ENCODE measurements at regions of chr14 and their contacts with region 1.

Region 1: GRCh38 chr14:23483236-23483854 is 13.8 kb downstream of the NGDN start:
- DNase-seq: peak; percentile 61 to 97 (median 81)

Region 2: DNA sequence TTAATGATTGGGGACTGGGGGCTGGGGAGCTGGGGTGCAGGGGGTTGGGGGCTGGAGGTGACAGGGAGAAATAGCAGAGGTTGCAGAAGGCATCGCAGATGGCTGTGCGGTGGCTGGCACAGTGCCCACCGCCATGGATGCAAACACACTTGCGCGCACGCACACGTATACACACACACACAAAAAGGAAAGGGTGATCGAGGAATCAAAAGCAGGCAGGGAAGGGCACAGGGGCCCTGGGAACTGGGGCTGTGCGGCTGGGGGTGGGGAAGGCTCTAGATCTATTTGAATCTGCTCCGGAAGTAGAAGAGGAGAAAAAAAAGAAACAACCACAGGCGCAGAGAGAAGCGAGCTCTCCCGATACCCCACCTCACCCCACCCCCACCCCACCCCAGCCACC is 28.8 kb after region 1 on chr14:
- intact Hi-C with region 1: loop called (anchors 2 kb)
- DNase-seq: peak in 4 of 10 donors; percentile 29 to 90 (median 54)

Region 3: GRCh38 chr14:23539248-23540140 is 56.1 kb after region 1 on chr14:
- intact Hi-C with region 1: loop called (anchors 2 kb)
- DNase-seq: peak in 4 of 10 donors; percentile 43 to 88 (median 67)